ENCODE measurements at regions of chr20 and their contacts with region 1.

Region 1: GRCh38 chr20:51042654-51043247 is 19.8 kb upstream of the KCNG1 start:
- DNase-seq: peak; percentile 20
- H3K4me3 Mint-ChIP-seq: no peak overlapping the region
- H3K27ac Mint-ChIP-seq: no peak overlapping the region
- H3K4me1 Mint-ChIP-seq: no peaks in the 10 kb centered on the region
- H3K27me3 Mint-ChIP-seq: no peaks in the 10 kb centered on the region
- CTCF ChIP-seq: peak; percentile 36

Region 2: GRCh38 chr20:51067792-51068191 is 25.0 kb after region 1 on chr20:
- CTCF ChIA-PET with region 1: interaction called, 13 read pairs
- intact Hi-C with region 1: no loop called
- DNase-seq: peak; percentile 26
- H3K4me3 Mint-ChIP-seq: no peak overlapping the region
- H3K27ac Mint-ChIP-seq: no peak overlapping the region
- H3K4me1 Mint-ChIP-seq: peaks cover 12% of the 10 kb centered on the region
- H3K27me3 Mint-ChIP-seq: peaks cover 52% of the 10 kb centered on the region
- CTCF ChIP-seq: no peak

Region 3: DNA sequence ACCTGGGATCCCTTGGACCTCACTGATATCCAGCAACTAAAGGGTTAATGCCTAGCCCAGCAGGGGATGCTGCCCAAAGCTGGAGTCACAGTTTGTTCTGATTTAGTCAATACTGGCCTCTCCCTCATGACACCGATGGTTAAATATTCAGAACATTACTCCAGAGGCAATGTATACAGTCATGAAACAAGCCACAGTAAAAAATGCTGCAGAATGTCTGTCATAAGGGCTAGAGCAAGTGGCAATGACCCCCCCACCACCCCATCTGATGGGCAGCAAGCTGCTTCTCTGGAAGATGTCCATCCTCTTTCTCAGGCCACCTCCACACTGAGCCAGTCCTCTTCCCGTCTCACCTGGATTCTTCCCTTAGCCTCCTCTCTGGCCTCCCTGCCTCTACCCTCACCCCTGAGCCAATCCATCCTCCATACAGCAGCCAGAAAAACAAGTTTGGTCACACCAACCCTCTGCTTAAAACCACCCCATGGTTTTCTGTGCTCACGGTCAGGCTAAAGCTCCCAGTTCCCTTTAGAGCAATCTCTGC is 79.2 kb after region 1 on chr20:
- CTCF ChIA-PET with region 1: no interaction called
- intact Hi-C with region 1: no loop called
- DNase-seq: peak; percentile 57
- H3K4me3 Mint-ChIP-seq: no peak overlapping the region
- H3K27ac Mint-ChIP-seq: peak overlapping the region; percentile 15
- H3K4me1 Mint-ChIP-seq: peaks cover 19% of the 10 kb centered on the region
- H3K27me3 Mint-ChIP-seq: peaks cover 57% of the 10 kb centered on the region
- CTCF ChIP-seq: no peak

Region 4: GRCh38 chr20:51272401-51272800 is 229.7 kb after region 1 on chr20:
- CTCF ChIA-PET with region 1: interaction called, 11 read pairs
- intact Hi-C with region 1: no loop called
- DNase-seq: no peak
- H3K4me3 Mint-ChIP-seq: no peak overlapping the region
- H3K27ac Mint-ChIP-seq: no peak overlapping the region
- H3K4me1 Mint-ChIP-seq: no peaks in the 10 kb centered on the region
- H3K27me3 Mint-ChIP-seq: peaks cover 96% of the 10 kb centered on the region
- CTCF ChIP-seq: no peak